ENCODE measurements at regions of chr2 and their contacts with region 1.

Region 1: GRCh38 chr2:2550856-2551255 is 219.8 kb upstream of the MYT1L start:
- DNase-seq: no peak
- ATAC-seq: no peak

Region 2: DNA sequence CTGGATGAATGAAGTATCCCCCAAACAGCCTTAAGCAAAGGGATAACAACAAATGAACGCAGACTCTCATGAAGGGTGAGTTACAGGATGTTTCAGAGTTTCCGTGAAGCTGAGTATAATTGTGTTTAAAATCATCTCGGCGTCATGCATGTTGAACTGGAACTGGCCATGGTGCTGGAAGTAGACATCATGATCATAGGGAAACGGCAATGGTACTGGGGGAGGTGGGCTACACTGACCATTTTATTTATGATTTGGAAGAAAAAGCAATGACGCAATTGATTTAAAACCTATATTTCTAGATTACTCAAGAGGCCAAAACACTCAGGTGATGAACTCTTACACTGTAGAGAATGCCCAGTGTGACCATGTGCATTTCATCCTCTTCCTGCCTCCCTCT is 168.2 kb after region 1 on chr2:
- intact Hi-C with region 1: no loop called
- DNase-seq: no peak
- ATAC-seq: no peak

Region 3: GRCh38 chr2:2769481-2770431 is 218.9 kb after region 1 on chr2:
- intact Hi-C with region 1: loop called in 1 of 2 experiments (anchors 5 kb)
- DNase-seq: peak; percentile 65
- ATAC-seq: peak; percentile 94 to 96